ENCODE measurements at regions of chr14 and their contacts with region 1.

Region 1: GRCh38 chr14:74109369-74109768 is 24.6 kb downstream of the LIN52 start:
- DNase-seq: no peak
- H3K4me3 ChIP-seq: no peak overlapping the region
- CTCF ChIP-seq: no peak
- POLR2A ChIP-seq: no peak

Region 2: GRCh38 chr14:73741386-73741875 is 367.9 kb before region 1 on chr14:
- intact Hi-C with region 1: no loop called
- DNase-seq: peak in 1 of 2 donors; percentile 95
- H3K4me3 ChIP-seq: no peak overlapping the region
- CTCF ChIP-seq: no peak
- POLR2A ChIP-seq: no peak

Region 3: GRCh38 chr14:74035556-74035955 is 73.8 kb before region 1 on chr14:
- intact Hi-C with region 1: no loop called
- DNase-seq: no peak
- H3K4me3 ChIP-seq: no peak overlapping the region
- CTCF ChIP-seq: no peak
- POLR2A ChIP-seq: no peak

Region 4: DNA sequence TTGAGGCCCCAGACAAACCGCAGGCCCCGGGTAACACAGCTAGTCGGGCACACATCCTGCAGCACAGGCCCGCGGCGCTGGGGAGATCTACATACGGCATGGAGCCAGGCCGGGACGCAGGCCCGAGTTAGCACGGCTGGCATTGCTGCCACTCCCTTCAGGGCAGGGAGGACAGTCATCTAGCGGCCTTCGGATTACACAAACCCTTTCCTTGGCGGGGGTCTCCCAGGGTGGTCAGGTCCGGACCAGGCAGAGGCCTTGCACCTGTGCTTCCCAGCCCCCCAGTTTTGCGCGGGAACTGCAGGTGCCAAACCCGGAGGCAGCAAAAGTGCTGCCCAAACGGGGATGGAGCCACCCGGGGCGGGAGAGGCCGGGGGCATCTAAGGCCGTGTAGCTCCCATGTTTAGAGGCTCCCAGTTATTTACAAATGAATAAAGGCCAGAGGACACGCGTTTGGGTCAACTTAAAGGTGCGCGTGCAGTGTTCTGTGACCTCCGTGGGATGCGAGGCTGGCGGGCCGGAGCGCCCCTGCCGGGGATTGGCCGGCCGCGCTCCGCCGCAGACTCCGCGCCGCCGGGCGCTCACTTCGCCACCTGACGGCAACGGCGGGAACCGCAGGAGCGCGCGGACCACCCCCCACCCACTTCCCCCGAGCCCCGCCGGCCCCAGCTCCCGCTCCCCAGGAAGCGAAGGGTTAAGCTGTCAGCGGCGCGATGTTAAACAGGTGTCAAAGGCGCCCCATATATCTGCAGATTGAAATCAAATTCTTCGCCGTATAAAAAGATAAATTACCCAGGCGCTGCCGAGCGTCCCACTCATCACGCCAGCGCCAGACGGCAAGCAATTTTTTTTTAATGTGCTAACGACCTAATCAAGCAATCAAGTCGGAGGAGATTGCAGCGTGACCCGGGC is 148.0 kb after region 1 on chr14:
- intact Hi-C with region 1: loop called (anchors 10 kb)
- DNase-seq: peak in 1 of 2 donors; percentile 87
- H3K4me3 ChIP-seq: peak overlapping the region; percentile 31
- CTCF ChIP-seq: peak in 1 of 3 donors; percentile 20
- POLR2A ChIP-seq: no peak

Region 5: DNA sequence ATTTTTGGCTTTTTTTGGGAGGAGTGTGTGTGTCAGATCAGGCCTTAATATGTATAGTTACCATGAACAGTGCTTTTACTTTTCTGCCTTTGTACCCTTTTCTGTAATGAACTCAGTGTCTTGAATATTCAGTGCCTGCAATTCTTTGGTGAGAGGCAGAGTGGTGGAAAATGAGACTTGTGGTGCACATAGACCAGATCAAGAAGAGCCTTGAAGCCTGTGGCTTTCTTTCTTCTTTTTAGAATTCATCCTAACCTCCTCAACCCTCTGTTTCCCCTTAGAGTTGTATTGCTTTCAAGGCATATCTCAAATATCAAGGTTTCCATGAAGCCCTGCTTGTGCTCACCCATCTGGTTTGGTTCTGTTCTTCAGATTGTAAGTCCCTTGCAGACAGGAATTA is 656.4 kb after region 1 on chr14:
- intact Hi-C with region 1: no loop called
- DNase-seq: no peak
- H3K4me3 ChIP-seq: no peak overlapping the region
- CTCF ChIP-seq: no peak
- POLR2A ChIP-seq: no peak